Heart right ventricle (tissue), 16 donors: ENCODE measurements at regions of chr1 and their contacts with region 1.

Region 1: GRCh38 chr1:237012788-237013383 is 8.6 kb upstream of the MT1HL1 start:
- DNase-seq: peak; percentile 71 to 79
- ATAC-seq: peak; percentile 85 to 95 (median 93)
- H3K4me3 ChIP-seq: peak overlapping the region in 3 of 10 donors; percentile 11 to 28 (median 15)
- H3K27ac ChIP-seq: peak overlapping the region; percentile 76 to 95 (median 90)
- H3K4me1 ChIP-seq: peaks cover 4 to 44% (median 11%) of the 10 kb centered on the region in 9 donors
- H3K27me3 ChIP-seq: no peaks in the 10 kb centered on the region
- CTCF ChIP-seq: no peak

Region 2: DNA sequence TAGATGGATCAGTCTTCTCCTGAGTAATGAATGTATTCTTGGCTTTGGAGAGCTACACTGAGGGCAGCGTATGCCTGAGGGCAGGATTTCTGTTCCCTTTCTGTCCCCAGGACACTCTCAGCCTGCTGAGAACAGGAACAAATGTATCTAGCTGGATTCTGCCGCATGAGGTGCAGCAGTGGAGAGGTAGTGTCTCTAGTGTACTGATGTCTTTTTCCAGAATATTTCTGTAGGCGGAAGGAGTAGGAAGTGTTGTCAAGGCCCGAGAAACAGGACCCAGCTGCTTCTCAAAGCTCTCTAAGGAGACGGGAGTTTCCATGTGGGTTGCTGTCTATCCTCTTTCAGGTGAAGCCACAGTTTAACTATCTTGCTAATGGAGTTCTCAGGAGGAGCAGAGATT is 74.1 kb before region 1 on chr1:
- intact Hi-C with region 1: no loop called
- DNase-seq: no peak
- ATAC-seq: peak in 4 of 8 donors; percentile 34 to 82 (median 68)
- H3K4me3 ChIP-seq: no peak overlapping the region
- H3K27ac ChIP-seq: no peak overlapping the region
- H3K4me1 ChIP-seq: peaks cover 0 to 8% (median 0%) of the 10 kb centered on the region in 9 donors
- H3K27me3 ChIP-seq: no peaks in the 10 kb centered on the region
- CTCF ChIP-seq: no peak

Region 3: DNA sequence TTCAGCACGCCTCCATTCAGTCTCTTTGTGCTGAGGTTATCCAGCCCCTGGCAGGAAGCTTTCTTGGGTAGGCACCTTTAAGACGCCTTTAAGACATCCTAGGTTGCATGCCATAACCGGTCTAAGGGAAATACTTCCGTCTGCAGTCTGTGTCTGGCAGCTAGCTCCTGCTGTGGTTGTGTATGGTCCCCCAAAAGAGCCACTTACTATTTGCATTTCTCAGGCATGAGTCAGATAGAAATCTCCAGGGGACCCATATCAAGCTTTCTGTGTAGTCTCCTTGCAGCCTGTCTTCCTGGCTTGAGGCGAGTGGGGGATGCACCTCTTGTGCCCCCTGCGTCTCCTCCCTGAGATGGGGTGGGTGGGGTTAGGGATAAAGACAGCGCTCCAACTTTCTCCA is 19.1 kb after region 1 on chr1:
- intact Hi-C with region 1: loop called in 1 of 10 experiments (anchors 1 kb)
- DNase-seq: no peak
- ATAC-seq: peak in 4 of 8 donors; percentile 1 to 36 (median 28)
- H3K4me3 ChIP-seq: peak overlapping the region in 6 of 10 donors; percentile 6 to 26 (median 14)
- H3K27ac ChIP-seq: peak overlapping the region; percentile 44 to 87 (median 72)
- H3K4me1 ChIP-seq: peaks cover 0 to 47% (median 17%) of the 10 kb centered on the region in 9 donors
- H3K27me3 ChIP-seq: no peaks in the 10 kb centered on the region
- CTCF ChIP-seq: no peak

Region 4: GRCh38 chr1:237071641-237072420 is 58.9 kb after region 1 on chr1:
- intact Hi-C with region 1: loop called in 1 of 10 experiments (anchors 10 kb)
- DNase-seq: no peak
- ATAC-seq: peak; percentile 19 to 64 (median 30)
- H3K4me3 ChIP-seq: peak overlapping the region in 5 of 10 donors; percentile 2 to 26 (median 11)
- H3K27ac ChIP-seq: peak overlapping the region in 6 of 10 donors; percentile 20 to 57 (median 34)
- H3K4me1 ChIP-seq: peaks cover 0 to 81% (median 33%) of the 10 kb centered on the region in 9 donors
- H3K27me3 ChIP-seq: no peaks in the 10 kb centered on the region
- CTCF ChIP-seq: no peak

Region 5: DNA sequence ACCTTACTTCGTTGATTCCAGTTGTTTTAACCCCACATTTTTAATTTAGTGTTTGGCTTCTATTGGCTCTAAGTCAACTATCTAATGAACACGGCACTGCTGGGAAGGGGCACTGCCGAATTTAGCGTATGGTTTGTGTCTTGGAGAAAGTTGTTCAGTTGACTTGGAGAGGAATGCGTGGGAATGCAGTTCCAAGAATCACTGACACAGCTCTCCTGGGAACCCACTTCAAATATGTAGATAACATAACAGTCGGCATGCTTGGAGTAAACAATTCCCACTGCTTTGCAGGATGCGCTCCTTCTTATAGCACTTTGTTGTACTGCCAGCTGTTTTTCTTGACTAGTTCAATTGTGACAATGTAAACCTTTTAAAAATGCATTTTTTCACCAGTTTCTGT is 133.4 kb after region 1 on chr1:
- intact Hi-C with region 1: no loop called
- DNase-seq: peak in 1 of 2 donors; percentile 63
- ATAC-seq: peak in 7 of 8 donors; percentile 40 to 74 (median 57)
- H3K4me3 ChIP-seq: peak overlapping the region in 3 of 10 donors; percentile 0 to 16 (median 15)
- H3K27ac ChIP-seq: peak overlapping the region; percentile 33 to 77 (median 69)
- H3K4me1 ChIP-seq: peaks cover 7 to 98% (median 71%) of the 10 kb centered on the region in 9 donors
- H3K27me3 ChIP-seq: no peaks in the 10 kb centered on the region
- CTCF ChIP-seq: no peak